Activated CD4-positive, alpha-beta memory T cell treated with anti-CD3 and anti-CD28 coated beads for 36 hours (primary cell): ENCODE measurements at regions of chr3 and their contacts with region 1.

Region 1: GRCh38 chr3:150763122-150763841 is at the start of gene SIAH2:
- DNase-seq: peak; percentile 96
- H3K4me3 Mint-ChIP-seq: peak within 1 kb of the TSS; percentile 99
- H3K27ac Mint-ChIP-seq: peak within 1 kb of the TSS; percentile 100
- H3K4me1 Mint-ChIP-seq: peaks cover 50% of the 10 kb centered on the region
- H3K27me3 Mint-ChIP-seq: no peaks in the 10 kb centered on the region
- total RNA-seq, gene SIAH2: 74.0 to 74.9 TPM

Region 2: DNA sequence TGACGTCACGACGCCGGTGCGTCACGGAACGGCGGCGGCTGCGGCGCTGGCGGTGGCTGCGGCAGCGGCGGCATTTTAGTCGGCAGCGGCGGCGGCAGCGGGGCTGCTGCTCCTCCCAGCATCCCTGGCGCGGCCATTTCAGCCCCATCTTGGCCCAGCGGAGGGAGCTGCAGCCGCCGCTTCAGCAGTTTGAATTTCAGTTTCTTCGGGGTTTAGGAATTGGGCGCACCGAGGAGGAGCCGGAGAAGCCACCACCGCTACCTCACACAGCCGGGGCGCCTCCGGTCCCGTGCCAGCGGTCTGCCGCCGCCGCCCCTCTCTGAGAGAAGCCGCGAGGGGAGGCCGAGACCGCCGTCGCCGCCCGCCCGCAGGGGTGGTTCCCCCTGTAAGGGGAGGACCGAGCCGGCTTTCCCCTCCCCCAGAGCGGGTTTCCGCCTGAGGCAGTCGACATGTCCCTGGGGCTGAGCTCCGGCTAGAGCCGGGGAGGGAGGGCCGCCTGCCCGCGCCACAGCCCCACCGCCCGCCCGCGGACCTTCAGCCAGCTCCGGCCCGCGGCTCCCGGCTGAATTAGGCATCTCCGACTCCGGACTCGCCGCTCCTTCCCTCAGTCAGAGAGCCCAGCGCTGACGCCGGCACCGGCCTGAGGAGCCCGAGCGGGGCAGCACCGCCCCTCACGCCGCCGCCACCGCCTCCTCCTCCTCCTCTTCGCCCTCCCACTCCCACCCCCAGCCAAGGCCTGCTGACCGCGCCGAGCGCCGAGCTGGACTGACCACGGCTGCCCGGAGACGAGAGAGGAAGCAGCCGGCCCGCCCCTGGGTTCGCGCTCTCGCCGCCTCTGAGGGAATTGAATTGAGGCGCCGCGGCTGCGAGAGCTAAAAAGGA is 354.8 kb before region 1 on chr3 and contains the start of gene TSC22D2:
- CTCF ChIA-PET with region 1: interaction called, 3 read pairs
- POLR2A ChIA-PET with region 1: interaction called, 15 read pairs
- intact Hi-C with region 1: loop called (anchors 1 kb)
- DNase-seq: peak; percentile 96
- H3K4me3 Mint-ChIP-seq: peak within 1 kb of the TSS; percentile 96
- H3K27ac Mint-ChIP-seq: peak within 1 kb of the TSS; percentile 97
- H3K4me1 Mint-ChIP-seq: peaks cover 21% of the 10 kb centered on the region
- H3K27me3 Mint-ChIP-seq: no peaks in the 10 kb centered on the region
- total RNA-seq, gene TSC22D2: 12.3 to 13.7 TPM

Region 3: GRCh38 chr3:150635526-150635925 is 127.8 kb before region 1 on chr3:
- CTCF ChIA-PET with region 1: no interaction called
- POLR2A ChIA-PET with region 1: no interaction called
- intact Hi-C with region 1: no loop called
- DNase-seq: no peak
- H3K4me3 Mint-ChIP-seq: no peak overlapping the region
- H3K27ac Mint-ChIP-seq: peak overlapping the region; percentile 72
- H3K4me1 Mint-ChIP-seq: peaks cover 29% of the 10 kb centered on the region
- H3K27me3 Mint-ChIP-seq: no peaks in the 10 kb centered on the region

Region 4: GRCh38 chr3:150703299-150704134 is 59.8 kb before region 1 on chr3 and contains the start of gene ERICH6:
- CTCF ChIA-PET with region 1: interaction called, 4 read pairs
- POLR2A ChIA-PET with region 1: interaction called, 8 read pairs
- intact Hi-C with region 1: loop called (anchors 1 kb)
- DNase-seq: peak; percentile 92
- H3K4me3 Mint-ChIP-seq: peak within 1 kb of the TSS; percentile 89
- H3K27ac Mint-ChIP-seq: peak within 1 kb of the TSS; percentile 81
- H3K4me1 Mint-ChIP-seq: peaks cover 21% of the 10 kb centered on the region
- H3K27me3 Mint-ChIP-seq: no peaks in the 10 kb centered on the region
- total RNA-seq, gene ERICH6: not detected

Region 5: GRCh38 chr3:150743508-150743907 is 19.8 kb before region 1 on chr3:
- CTCF ChIA-PET with region 1: interaction called, 40 read pairs
- POLR2A ChIA-PET with region 1: interaction called, 140 read pairs
- intact Hi-C with region 1: loop called (anchors 1 kb)
- DNase-seq: peak; percentile 5
- H3K4me3 Mint-ChIP-seq: no peak overlapping the region
- H3K27ac Mint-ChIP-seq: peak overlapping the region; percentile 55
- H3K4me1 Mint-ChIP-seq: peaks cover 94% of the 10 kb centered on the region
- H3K27me3 Mint-ChIP-seq: no peaks in the 10 kb centered on the region

Region 6: GRCh38 chr3:150787741-150788370 is 24.6 kb after region 1 on chr3:
- CTCF ChIA-PET with region 1: interaction called, 111 read pairs
- POLR2A ChIA-PET with region 1: interaction called, 152 read pairs
- intact Hi-C with region 1: loop called (anchors 1 kb)
- DNase-seq: peak; percentile 90
- H3K4me3 Mint-ChIP-seq: no peak overlapping the region
- H3K27ac Mint-ChIP-seq: peak overlapping the region; percentile 10
- H3K4me1 Mint-ChIP-seq: peaks cover 46% of the 10 kb centered on the region
- H3K27me3 Mint-ChIP-seq: peaks cover 2% of the 10 kb centered on the region

Region 7: GRCh38 chr3:151305101-151305750 is 541.9 kb after region 1 on chr3:
- CTCF ChIA-PET with region 1: no interaction called
- POLR2A ChIA-PET with region 1: no interaction called
- intact Hi-C with region 1: loop called (anchors 1 kb)
- DNase-seq: peak; percentile 52
- H3K4me3 Mint-ChIP-seq: peak overlapping the region; percentile 20
- H3K27ac Mint-ChIP-seq: peak overlapping the region; percentile 56
- H3K4me1 Mint-ChIP-seq: peaks cover 78% of the 10 kb centered on the region
- H3K27me3 Mint-ChIP-seq: peaks cover 17% of the 10 kb centered on the region